CD8-positive, alpha-beta T cell (primary cell): ENCODE measurements at regions of chr1 and their contacts with region 1.

Region 1: GRCh38 chr1:173639102-173639501 is 4.0 kb downstream of the TEX50 start:
- DNase-seq: no peak
- ATAC-seq: no peak
- H3K4me3 ChIP-seq: no peak overlapping the region
- H3K4me3 Mint-ChIP-seq: no peak overlapping the region
- H3K27ac ChIP-seq: no peak overlapping the region
- H3K27ac Mint-ChIP-seq: no peak overlapping the region
- H3K4me1 ChIP-seq: no peaks in the 10 kb centered on the region
- H3K4me1 Mint-ChIP-seq: no peaks in the 10 kb centered on the region
- H3K27me3 ChIP-seq: no peaks in the 10 kb centered on the region
- H3K27me3 Mint-ChIP-seq: no peaks in the 10 kb centered on the region
- CTCF ChIP-seq: no peak

Region 2: DNA sequence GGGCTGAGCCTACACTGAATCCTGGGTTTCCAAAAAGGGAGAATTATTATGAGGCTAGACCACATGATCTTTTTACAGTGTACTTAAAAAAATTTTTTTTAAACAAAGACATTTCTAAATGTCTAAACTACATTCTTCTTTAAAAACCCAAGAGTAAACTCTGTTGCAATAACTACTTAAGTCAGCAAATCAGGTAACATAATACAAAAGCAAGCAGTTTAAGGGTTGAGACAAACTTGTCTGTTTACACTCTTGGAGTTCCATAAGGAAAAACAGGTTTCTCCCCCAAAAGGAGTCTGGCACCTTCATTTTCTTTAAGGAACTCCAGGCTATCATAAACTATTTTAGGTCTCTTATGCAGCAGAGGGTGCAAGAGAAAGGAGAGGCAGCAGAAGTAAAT is 43.1 kb after region 1 on chr1:
- CTCF ChIA-PET with region 1: no interaction called
- POLR2A ChIA-PET with region 1: no interaction called
- intact Hi-C with region 1: loop called in 1 of 2 experiments (anchors 10 kb)
- DNase-seq: no peak
- ATAC-seq: no peak
- H3K4me3 ChIP-seq: no peak overlapping the region
- H3K4me3 Mint-ChIP-seq: no peak overlapping the region
- H3K27ac ChIP-seq: no peak overlapping the region
- H3K27ac Mint-ChIP-seq: peak overlapping the region; percentile 3
- H3K4me1 ChIP-seq: no peaks in the 10 kb centered on the region
- H3K4me1 Mint-ChIP-seq: peaks cover 4% of the 10 kb centered on the region
- H3K27me3 ChIP-seq: no peaks in the 10 kb centered on the region
- H3K27me3 Mint-ChIP-seq: no peaks in the 10 kb centered on the region
- CTCF ChIP-seq: no peak